Activated CD4-positive, alpha-beta memory T cell treated with anti-CD3 and anti-CD28 coated beads, Interleukin-2, amount 10 ng/mL, durations not matched to agents 7 days and 5 days (primary cell): ENCODE measurements at regions of chr1 and their contacts with region 1.

Region 1: DNA sequence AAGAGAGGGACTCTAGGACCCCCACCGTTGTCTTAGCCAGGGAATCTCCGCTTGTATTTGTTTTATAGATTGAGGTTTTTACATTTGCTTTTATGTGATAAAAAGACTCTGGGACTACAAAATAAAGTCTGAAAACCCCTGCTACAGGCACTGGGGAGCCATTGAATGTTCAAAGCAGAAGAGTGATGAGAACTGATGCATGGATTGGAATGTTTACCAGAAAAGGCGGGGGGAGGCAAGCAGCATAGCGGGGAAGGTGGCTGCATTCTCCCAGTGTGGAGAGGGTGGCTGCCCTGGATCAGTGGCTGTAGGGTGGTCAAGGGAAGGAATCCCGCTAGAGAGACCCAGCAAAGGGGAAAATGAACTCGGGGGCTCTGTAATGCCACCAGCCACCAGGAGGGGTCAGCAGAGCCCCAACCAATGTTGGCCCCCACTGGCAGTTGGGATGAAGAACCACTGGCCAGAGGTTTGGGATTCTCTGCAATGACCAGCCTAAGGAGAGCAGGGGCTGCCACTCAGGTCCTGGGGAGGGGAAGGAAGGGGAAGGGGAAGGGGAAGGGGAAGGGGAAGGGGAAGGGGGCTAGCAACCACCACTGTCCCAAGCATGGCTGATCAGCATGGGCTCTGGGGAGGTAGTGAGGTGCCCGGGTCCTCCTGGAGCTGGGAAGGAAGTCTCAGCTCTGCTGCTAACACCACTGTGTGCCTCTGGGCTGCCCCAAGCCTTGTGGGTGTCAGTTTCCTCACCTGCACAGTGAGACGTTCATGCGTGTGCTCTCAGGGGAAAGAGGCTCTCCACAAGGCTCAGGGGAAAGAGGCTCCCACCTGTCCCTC is 19.2 kb upstream of the PEF1 start:
- DNase-seq: peak; percentile 63
- H3K4me3 Mint-ChIP-seq: no peak overlapping the region
- H3K27ac Mint-ChIP-seq: no peak overlapping the region
- H3K4me1 Mint-ChIP-seq: no peaks in the 10 kb centered on the region
- H3K27me3 Mint-ChIP-seq: peaks cover 7% of the 10 kb centered on the region

Region 2: DNA sequence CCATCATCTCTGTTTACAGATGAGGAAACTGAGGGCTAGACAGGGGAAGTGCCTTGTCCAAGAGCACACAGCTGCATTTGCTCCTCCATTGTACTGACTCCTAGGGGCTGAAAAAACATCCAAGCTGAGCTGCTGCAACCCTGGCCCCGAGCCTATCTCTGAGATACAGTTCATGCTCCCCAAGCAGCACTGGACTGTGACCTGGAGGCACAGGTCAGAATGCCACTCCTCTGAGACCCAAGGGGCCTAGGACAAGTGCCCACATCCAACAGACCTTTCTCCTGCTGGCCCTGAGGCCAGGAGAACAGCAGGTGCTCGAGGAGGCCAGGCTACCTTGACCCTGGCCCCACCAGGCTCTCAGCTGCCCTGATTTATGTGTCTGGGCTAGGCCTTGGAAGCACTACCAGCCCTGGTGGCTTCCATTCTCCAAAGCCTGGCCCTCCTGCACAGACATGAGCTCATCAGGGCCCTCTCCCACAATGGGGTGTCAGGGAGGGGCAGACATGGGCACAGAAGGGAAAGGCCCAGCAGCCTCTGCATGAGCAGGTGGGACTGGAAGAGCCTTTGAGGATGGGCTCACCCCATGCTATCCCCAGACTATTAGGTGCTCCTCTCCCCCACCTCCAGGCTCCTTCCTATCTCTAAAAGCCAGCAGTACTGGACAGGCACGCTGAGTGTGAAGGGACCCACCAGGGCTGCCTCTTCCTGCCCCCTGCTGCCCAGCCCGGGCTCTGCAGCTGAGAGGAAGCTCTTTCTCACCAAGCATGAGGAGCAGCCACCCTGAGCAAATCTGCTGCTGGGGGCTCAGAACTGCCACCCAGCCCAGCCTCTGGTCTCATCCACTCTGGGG is 81.5 kb after region 1 on chr1:
- CTCF ChIA-PET with region 1: interaction called, 17 read pairs
- POLR2A ChIA-PET with region 1: no interaction called
- DNase-seq: peak; percentile 73
- H3K4me3 Mint-ChIP-seq: no peak overlapping the region
- H3K27ac Mint-ChIP-seq: no peak overlapping the region
- H3K4me1 Mint-ChIP-seq: peaks cover 10% of the 10 kb centered on the region
- H3K27me3 Mint-ChIP-seq: peaks cover 10% of the 10 kb centered on the region